Psoas muscle (tissue), 8 donors: ENCODE measurements at regions of chr13 and their contacts with region 1.

Region 1: DNA sequence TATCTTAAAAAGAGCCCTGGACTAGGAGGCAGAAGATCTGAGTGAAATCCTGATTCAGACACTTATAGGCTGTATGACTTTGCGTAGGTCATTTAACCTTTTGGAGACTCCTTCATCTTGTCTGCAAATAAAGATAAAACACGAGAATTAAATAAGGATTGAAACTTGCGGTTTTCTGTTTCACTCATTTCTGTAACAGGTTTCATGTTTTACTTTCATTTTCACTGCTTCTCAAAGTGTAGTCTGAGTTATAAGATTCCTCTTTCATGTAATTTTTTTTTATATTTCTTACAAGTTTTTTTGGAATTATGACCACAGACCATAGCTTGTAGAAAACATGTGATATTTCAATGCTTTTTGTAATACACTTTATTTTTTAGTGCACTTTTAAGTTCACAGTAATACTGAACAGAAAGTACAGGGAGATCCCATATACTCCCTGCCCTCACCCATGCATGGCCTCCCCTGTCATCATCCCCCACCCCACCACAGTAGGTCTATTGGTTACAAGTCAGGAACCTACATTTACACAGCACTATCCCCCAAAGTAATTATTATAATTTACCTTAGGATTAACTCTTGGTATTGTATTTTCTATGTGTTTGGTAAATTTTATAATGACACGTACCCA is 174.6 kb downstream of the ITGBL1 start:
- DNase-seq: no peak
- ATAC-seq: no peak
- H3K4me3 ChIP-seq: peak overlapping the region; percentile 43
- H3K27ac ChIP-seq: no peak overlapping the region
- H3K4me1 ChIP-seq: no peaks in the 10 kb centered on the region
- H3K27me3 ChIP-seq: no peaks in the 10 kb centered on the region
- CTCF ChIP-seq: no peak

Region 2: DNA sequence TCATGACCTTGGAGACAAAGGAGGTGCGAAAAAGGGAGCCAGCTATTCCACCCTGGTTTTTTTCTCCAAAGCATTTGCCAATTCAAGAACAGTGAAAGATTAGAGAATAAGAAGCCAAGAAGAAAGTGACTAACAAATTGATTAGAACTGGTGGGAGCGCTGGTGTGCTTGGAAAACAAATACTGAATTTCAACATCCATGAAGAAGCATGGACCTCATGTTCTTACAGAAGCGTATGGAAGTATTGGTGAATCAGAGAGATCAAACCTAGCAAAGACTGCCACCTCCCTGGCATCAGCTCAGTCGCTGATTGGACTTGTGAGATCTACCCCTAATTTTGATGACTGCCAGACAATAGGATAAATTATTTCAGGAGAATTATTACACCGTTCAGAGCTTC is 20.7 kb after region 1 on chr13:
- intact Hi-C with region 1: loop called in 1 of 2 experiments (anchors 2 kb)
- DNase-seq: no peak
- ATAC-seq: no peak
- H3K4me3 ChIP-seq: no peak overlapping the region
- H3K27ac ChIP-seq: no peak overlapping the region
- H3K4me1 ChIP-seq: no peaks in the 10 kb centered on the region
- H3K27me3 ChIP-seq: no peaks in the 10 kb centered on the region
- CTCF ChIP-seq: no peak